ENCODE measurements at regions of chr1 and their contacts with region 1.

Region 1: DNA sequence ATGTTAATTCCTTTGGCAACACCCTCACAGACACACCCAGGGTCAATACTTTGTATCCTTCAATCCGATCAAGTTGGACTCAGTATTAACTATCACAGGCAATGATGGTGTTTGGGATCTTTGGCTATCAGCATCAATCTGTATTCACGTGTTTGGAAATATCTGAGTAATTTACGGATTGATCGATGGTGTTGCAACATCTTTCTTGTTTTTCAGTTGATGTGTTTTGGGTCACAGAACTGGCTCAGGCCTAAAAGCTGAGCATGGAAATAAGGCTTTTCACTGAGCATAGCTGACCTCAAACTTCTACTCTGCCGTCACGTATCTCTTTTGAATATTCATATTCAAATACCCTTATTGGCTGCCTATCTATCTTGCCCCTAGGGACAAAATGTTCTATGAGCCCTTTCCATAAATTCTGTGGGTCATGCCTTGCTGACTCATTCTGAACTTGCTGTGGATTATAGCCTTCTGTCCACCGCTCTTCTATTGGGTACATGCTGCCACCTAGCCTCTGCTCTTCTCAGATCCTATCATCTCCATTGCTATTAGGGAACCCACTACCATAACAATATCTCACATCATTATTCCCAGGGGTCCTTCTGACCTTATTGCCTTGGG is 156.0 kb downstream of the PDE4B start:
- DNase-seq: peak; percentile 79
- ATAC-seq: peak; percentile 86
- H3K4me3 ChIP-seq: no peak overlapping the region
- H3K27ac ChIP-seq: no peak overlapping the region
- H3K4me1 ChIP-seq: no peaks in the 10 kb centered on the region
- H3K27me3 ChIP-seq: no peaks in the 10 kb centered on the region
- CTCF ChIP-seq: peak; percentile 66
- POLR2A ChIP-seq: no peak
- RAD21 ChIP-seq: peak; percentile 85

Region 2: DNA sequence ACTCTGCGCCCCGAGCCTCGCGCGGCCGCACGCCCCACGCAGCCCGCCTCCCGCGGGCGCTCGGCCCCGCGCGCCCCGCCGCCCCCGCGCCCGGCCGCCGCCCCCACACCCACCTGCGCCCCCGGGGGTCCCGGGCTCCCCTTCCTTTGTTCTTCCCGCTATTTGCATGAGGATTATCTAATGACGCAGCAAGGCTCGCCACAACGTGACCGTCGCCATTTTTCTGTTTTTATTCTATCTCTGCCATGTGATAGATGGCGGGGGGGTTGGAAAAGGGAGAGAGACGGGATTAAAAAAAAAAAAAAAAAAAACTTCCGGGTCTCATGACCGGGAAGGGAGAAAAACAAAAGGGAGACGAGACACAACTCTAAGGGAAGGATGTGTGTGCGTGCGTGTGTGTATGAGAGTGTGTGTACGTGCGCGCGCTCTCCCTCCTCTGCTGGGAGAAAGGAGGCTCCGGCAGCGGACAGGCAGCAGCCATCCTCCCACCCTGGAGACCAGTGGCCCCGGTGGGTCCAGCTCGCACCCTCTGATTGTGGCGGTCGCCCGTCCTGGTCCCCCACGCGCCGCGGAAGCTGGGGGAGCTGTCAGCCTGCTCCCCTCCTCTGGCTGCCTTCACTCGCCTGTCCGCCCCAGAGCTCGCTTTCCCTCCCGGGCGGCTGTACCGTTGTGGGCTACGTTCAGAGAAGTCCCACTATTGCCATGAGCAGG is 881.1 kb before region 1 on chr1:
- CTCF ChIA-PET with region 1: no interaction called
- POLR2A ChIA-PET with region 1: no interaction called
- dilution Hi-C with region 1: no loop called
- in situ Hi-C with region 1: no loop called
- intact Hi-C with region 1: loop called (anchors 10 kb)
- DNase-seq: peak; percentile 56
- ATAC-seq: peak; percentile 30
- H3K4me3 ChIP-seq: peak overlapping the region; percentile 58
- H3K27ac ChIP-seq: peak overlapping the region; percentile 51
- H3K4me1 ChIP-seq: peaks cover 4% of the 10 kb centered on the region; the same call in 1 of the 2 replicates
- H3K27me3 ChIP-seq: peaks cover 5% of the 10 kb centered on the region; the same call in 1 of the 2 replicates
- CTCF ChIP-seq: no peak
- POLR2A ChIP-seq: no peak
- RAD21 ChIP-seq: no peak

Region 3: DNA sequence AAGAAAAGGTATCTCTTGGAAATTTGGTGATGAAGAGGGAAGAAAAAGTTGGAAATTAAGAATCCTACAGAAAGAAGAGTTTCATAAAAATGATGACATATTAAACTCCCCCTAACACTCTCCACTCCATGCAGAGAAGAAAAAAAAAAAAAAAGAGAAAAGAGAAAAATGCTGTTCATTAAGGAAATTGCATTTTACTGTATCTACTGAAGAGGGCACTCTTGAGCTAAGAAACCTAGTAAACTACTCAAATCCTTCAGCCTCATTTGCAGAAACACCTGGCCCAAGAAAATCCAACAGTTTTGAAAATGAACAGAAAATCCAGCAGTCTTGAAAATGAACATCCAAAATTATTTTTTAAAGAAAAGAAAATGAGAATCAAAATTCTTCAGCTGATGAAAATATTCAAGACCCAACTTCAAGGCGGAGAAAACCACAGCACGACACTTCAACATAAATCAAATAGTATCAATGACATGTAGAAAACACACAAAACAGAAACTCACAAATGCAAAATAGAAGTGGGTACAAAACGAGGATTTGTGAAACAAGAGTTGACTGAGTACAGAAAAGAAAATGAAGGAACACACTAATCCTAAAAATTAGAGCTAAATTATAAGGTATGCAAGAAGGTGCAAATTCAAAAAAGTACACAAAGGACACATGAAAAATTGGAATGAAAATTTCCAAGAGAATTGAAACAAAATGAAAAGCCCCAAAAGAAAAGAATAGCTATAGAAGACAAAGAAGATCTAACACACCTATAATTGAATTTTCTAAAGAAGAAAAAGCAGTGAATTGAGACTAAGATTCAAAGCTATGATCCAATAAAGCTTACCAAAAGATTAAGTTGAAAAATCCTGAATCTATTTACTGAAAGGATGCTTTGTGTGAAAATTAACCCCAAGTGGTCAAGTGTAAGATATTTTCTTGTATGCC is 712.6 kb before region 1 on chr1:
- CTCF ChIA-PET with region 1: no interaction called
- POLR2A ChIA-PET with region 1: no interaction called
- dilution Hi-C with region 1: no loop called
- in situ Hi-C with region 1: no loop called
- intact Hi-C with region 1: loop called (anchors 5 kb)
- DNase-seq: peak; percentile 37
- ATAC-seq: no peak
- H3K4me3 ChIP-seq: no peak overlapping the region
- H3K27ac ChIP-seq: no peak overlapping the region
- H3K4me1 ChIP-seq: no peaks in the 10 kb centered on the region
- H3K27me3 ChIP-seq: no peaks in the 10 kb centered on the region
- CTCF ChIP-seq: peak; percentile 52
- POLR2A ChIP-seq: no peak
- RAD21 ChIP-seq: peak; percentile 65

Region 4: DNA sequence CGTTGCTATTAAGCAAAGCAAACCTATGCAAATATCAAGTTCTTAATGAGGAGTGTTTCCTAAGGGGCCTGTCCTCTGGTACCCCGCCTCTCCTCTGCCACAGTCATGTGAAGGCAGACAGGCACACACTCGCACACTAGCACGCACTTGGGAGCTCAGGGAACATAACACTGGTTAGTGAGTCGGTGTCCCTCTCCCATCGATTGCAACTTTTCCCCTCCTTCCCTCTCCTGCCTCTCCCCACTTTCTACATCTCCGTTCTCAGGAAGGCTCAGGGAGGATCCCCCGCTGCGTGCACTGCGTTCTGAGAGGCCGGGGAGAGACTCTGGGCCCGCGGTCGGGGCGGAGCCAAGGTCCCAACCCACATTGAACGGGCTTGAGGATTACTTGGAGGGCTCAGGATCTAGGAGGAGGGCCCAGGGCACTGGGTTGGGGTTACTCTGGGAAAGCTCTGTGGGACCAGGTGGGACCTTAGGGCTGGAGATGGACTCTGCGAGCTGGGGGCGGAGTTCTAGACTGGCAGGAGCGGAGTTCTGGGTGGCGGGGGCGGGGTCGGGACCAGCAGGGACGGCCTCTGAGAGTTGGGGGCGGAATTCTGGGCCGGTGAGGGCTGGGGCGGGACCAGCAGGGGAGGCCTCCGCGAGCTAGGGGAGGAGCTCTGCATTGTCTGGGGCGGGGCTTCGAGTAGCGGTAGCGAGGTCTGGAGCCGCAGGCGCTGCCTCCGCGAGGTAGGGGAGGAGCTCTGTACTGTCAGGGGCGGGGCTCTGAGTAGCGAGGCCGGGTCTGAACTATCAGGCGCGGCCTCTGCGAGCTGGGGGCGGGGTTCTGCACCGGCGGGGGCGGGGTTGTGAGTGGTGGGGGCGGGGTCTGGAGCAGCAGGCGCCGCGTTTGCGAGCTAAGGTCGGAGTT is 528.8 kb before region 1 on chr1:
- CTCF ChIA-PET with region 1: no interaction called
- POLR2A ChIA-PET with region 1: no interaction called
- dilution Hi-C with region 1: no loop called
- in situ Hi-C with region 1: loop called (anchors 10 kb)
- intact Hi-C with region 1: loop called (anchors 5 kb)
- DNase-seq: peak; percentile 97
- ATAC-seq: peak; percentile 95
- H3K4me3 ChIP-seq: peak overlapping the region; percentile 67
- H3K27ac ChIP-seq: peak overlapping the region; percentile 78
- H3K4me1 ChIP-seq: peaks cover 12% of the 10 kb centered on the region
- H3K27me3 ChIP-seq: no peaks in the 10 kb centered on the region
- CTCF ChIP-seq: no peak
- POLR2A ChIP-seq: no peak
- RAD21 ChIP-seq: no peak

Region 5: GRCh38 chr1:65431111-65431705 is 517.5 kb before region 1 on chr1:
- CTCF ChIA-PET with region 1: no interaction called
- POLR2A ChIA-PET with region 1: no interaction called
- dilution Hi-C with region 1: no loop called
- in situ Hi-C with region 1: loop called (anchors 10 kb)
- intact Hi-C with region 1: loop called (anchors 1 kb)
- DNase-seq: peak; percentile 55
- ATAC-seq: peak; percentile 53
- H3K4me3 ChIP-seq: no peak overlapping the region
- H3K27ac ChIP-seq: no peak overlapping the region
- H3K4me1 ChIP-seq: peaks cover 2% of the 10 kb centered on the region; the same call in 1 of the 2 replicates
- H3K27me3 ChIP-seq: no peaks in the 10 kb centered on the region
- CTCF ChIP-seq: peak; percentile 59
- POLR2A ChIP-seq: no peak
- RAD21 ChIP-seq: peak; percentile 62

Region 6: GRCh38 chr1:65717815-65718454 is 230.8 kb before region 1 on chr1:
- CTCF ChIA-PET with region 1: interaction called, 4 read pairs
- POLR2A ChIA-PET with region 1: no interaction called
- dilution Hi-C with region 1: no loop called
- in situ Hi-C with region 1: loop called (anchors 10 kb)
- intact Hi-C with region 1: loop called (anchors 1 kb)
- DNase-seq: peak; percentile 66
- ATAC-seq: peak; percentile 81
- H3K4me3 ChIP-seq: no peak overlapping the region
- H3K27ac ChIP-seq: no peak overlapping the region
- H3K4me1 ChIP-seq: no peaks in the 10 kb centered on the region
- H3K27me3 ChIP-seq: no peaks in the 10 kb centered on the region; the same call in 1 of the 2 replicates
- CTCF ChIP-seq: peak; percentile 59
- POLR2A ChIP-seq: no peak
- RAD21 ChIP-seq: peak; percentile 78

Region 7: DNA sequence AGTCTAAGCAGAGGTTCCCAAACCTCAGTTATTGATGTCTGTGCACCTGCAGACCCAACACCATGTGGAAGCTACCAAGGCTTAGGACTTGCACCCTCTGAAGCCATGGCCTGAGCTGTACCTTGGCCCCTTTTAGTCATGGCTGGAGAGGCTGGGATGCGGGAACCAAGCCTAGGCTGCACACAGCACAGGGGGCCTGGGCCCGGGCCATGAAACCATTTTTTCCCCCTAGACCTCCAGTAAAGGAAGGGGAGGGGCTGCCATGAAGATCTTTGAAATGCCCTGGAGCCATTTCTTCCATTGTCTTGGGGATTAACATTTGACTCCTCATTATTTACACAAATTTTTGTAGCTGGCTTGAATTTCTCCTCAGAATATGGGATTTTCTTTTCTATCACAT is 109.8 kb after region 1 on chr1:
- CTCF ChIA-PET with region 1: no interaction called
- POLR2A ChIA-PET with region 1: no interaction called
- dilution Hi-C with region 1: no loop called
- in situ Hi-C with region 1: no loop called
- intact Hi-C with region 1: no loop called
- DNase-seq: no peak
- ATAC-seq: no peak
- H3K4me3 ChIP-seq: no peak overlapping the region
- H3K27ac ChIP-seq: no peak overlapping the region
- H3K4me1 ChIP-seq: no peaks in the 10 kb centered on the region
- H3K27me3 ChIP-seq: no peaks in the 10 kb centered on the region; the same call in 1 of the 2 replicates
- CTCF ChIP-seq: no peak
- POLR2A ChIP-seq: no peak
- RAD21 ChIP-seq: no peak

Region 8: DNA sequence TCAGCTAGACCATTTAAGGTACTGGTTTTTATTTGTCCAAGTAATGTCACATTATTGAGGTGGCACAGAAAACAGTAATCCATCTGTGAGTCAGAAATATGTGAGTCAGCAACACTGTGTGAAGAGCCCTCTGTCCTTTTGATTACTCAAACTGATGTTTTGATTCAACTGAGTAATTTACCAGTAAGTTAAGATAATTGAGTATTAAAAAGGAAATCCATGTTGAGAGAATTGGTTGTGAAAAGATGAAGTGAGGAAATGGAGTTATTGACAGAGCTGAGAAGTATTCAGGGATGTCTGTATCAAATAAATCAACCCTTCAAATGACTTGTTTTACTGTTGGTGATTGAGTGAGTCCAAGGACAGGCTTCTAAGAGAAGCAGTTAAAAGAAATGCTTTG is 282.5 kb after region 1 on chr1:
- CTCF ChIA-PET with region 1: no interaction called
- POLR2A ChIA-PET with region 1: no interaction called
- dilution Hi-C with region 1: no loop called
- in situ Hi-C with region 1: no loop called
- intact Hi-C with region 1: no loop called
- DNase-seq: peak; percentile 52
- ATAC-seq: peak; percentile 32; the same call in 1 of the 2 replicates
- H3K4me3 ChIP-seq: no peak overlapping the region
- H3K27ac ChIP-seq: no peak overlapping the region
- H3K4me1 ChIP-seq: no peaks in the 10 kb centered on the region
- H3K27me3 ChIP-seq: no peaks in the 10 kb centered on the region
- CTCF ChIP-seq: no peak
- POLR2A ChIP-seq: no peak
- RAD21 ChIP-seq: no peak

Measured in IMR-90 (cell line).